Mucosa of descending colon (tissue), 3 donors: ENCODE measurements at regions of chr15 and their contacts with region 1.

Region 1: DNA sequence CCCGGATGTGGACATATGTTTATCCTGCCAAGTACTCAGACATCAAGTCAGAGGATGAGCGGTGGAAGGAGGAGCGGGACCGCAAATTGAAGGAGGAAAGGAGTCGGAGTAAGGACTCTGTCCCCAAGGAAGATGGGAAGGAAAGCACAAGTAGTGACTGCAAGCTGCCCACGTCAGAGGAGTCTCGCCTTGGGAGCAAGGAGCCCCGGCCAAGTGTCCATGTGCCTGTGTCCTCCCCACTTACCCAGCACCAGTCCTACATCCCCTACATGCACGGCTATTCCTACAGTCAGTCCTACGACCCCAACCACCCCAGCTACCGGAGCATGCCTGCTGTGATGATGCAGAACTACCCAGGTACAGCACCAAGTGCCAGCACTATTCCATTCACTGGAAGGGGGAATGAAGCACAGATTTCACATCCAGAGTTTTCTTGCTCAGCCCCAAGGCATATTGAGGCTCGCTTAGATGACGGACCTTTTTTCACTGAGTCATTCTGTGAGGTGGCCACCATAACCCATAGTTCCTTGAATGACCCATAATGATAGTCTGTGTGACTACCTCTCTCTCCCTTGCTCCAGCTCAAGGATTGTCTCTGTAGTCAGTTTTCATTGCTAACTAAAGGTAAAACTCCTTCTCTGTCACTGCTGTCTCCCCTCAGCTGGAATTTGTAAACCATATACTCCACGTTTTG is 97.1 kb downstream of the RBPMS2 start:
- DNase-seq: no peak
- ATAC-seq: no peak
- H3K4me3 ChIP-seq: no peak overlapping the region
- H3K4me1 ChIP-seq: no peaks in the 10 kb centered on the region
- CTCF ChIP-seq: no peak

Region 2: DNA sequence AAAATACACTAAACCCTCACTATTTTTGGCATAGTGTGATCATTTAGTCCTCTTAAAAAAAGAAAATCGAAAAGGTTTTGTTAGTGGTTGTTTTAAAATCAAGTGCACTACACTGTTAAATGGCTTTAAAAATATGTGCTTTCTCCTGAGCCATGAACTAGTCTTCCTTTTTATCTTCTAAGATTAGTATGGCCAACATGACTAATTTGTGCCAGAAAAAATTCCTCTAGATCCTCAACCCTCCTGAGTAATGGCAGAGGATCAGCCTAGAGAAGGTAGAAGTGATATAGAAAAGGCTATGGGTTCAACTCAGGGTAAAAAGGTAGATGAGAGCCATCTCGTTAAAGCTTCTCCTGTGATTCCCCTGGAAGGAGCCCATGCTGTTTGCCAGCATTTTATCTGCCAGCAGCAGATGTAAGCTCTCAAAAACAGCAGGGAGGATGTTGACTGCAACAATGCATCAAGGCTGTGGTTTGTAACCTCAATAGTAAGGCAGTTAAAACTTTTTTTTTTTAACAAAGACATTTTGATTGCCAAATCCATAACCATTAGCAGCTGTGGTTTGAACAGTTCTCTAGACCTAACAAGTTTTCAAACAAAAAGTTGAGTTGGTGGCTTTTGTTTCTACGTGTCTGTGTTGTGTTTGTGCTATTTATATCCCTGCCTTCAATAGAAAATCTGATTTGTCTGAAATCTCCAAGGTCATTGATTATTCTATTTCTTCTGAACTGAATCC is 248.1 kb before region 1 on chr15:
- intact Hi-C with region 1: loop called in 1 of 2 experiments (anchors 10 kb)
- DNase-seq: peak in 1 of 3 donors; percentile 20
- ATAC-seq: peak; percentile 73
- H3K4me3 ChIP-seq: no peak overlapping the region
- H3K4me1 ChIP-seq: no peaks in the 10 kb centered on the region
- CTCF ChIP-seq: no peak

Region 3: DNA sequence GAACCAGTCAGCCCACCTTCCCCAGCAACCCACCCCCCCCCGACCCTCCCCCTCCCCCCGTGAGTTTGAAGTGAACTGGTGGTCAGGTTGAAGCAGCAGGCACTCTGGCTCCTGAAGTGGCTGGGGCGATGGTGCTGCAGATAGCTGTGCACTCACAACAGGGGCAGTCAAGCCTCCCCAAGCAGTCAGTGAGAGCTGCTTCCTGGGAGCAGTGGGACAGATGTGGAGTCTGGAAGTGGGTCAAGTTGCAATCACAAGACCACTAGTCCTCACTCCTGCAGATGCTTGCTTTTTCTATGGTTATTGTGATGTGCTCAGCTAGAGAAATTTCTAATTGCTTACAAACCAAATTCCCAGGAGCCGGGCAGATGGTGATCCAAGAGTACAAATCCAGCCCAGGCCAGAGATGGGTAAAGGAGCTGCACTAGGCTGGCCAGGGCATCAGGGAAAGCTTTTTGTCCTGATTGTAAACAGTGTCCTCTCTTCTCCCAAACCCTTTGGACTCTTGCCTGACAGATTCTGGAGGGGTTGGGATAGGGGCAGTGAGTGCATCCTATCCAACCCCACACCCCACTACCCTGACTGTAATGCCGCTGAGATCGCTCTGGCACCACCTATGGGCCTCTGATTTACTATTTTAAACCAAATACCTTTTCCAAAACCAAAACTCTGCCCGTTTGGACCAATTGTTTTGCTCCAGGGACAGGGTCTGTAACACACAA is 516.7 kb after region 1 on chr15:
- intact Hi-C with region 1: no loop called
- DNase-seq: no peak
- ATAC-seq: peak; percentile 25
- H3K4me3 ChIP-seq: no peak overlapping the region
- H3K4me1 ChIP-seq: no peaks in the 10 kb centered on the region
- CTCF ChIP-seq: no peak